IMR-90 (cell line): ENCODE measurements at regions of chr2 and their contacts with region 1.

Region 1: DNA sequence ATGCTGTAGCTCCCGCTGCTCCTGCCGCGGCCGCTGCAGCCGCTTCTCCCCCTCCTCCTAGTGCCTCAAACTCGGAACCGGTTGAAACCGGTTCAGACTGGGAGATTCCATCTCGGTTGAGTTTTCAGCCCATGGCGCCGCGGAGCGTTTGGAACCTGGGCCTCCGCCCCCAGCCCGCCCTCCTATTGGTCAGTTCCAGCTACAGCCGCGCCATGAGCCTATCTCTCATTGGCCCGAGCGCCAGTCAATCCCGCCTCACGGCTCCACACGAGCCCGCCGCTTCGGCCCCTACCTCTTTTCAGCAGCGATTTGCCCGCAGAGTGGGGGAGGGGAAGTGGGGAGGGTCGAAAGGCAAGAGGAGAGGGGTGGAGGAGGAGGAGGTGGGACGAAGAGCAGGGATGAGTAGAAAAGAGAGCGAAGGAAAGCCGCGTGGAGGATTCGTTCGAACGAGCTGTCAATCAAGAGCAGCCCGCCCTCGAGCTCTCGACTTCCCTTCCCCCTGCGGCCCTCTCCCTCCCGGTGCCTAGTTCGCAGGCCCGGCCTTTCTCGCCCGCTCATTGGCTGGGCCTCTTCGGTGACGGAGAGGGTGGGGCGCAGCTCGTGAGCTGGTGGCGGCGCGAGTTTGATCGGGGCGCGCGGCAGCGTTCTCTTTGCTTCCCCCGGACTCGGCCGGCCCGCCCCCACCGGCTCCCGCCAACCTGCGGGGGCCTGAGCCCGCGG is at the start of gene XPO1:
- DNase-seq: peak; percentile 99
- ATAC-seq: peak; percentile 88
- H3K4me3 ChIP-seq: peak within 1 kb of the TSS; percentile 83
- H3K27ac ChIP-seq: peak within 1 kb of the TSS; percentile 89
- H3K4me1 ChIP-seq: peaks cover 4% of the 10 kb centered on the region
- H3K27me3 ChIP-seq: no peaks in the 10 kb centered on the region
- CTCF ChIP-seq: no peak
- POLR2A ChIP-seq: peak; percentile 76
- RAD21 ChIP-seq: no peak
- total RNA-seq, gene XPO1: 104 and 192 TPM in 2 replicates

Region 2: DNA sequence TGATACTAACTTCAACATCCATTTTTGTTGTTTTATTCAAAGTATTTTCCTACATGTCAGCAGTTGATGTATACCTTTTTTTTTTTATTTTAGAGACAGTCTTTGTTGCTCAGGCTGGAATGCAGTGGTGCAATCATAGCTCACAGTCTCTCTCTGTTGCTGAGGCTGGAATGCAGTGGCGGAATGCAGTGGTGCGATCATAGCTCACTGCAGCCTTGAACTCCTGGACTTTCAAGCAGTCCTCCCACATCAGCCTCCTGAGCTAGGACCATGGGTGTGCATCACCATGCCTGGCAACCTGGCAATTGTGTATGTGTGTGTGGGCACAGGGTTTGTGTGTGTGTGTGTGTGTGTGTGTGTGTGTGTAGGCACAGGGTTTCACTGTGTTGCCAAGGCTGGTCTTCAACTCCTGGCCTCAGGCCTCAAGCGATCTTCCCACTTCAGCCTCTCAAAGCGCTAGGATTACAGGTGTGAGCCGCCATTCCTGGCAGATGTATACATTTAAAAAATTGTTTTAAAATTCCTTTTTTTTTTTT is 447.9 kb before region 1 on chr2:
- CTCF ChIA-PET with region 1: no interaction called
- POLR2A ChIA-PET with region 1: no interaction called
- dilution Hi-C with region 1: no loop called
- in situ Hi-C with region 1: no loop called
- intact Hi-C with region 1: no loop called
- DNase-seq: peak; percentile 35
- ATAC-seq: peak; percentile 76
- H3K4me3 ChIP-seq: no peak overlapping the region
- H3K27ac ChIP-seq: no peak overlapping the region
- H3K4me1 ChIP-seq: no peaks in the 10 kb centered on the region
- H3K27me3 ChIP-seq: no peaks in the 10 kb centered on the region
- CTCF ChIP-seq: no peak
- POLR2A ChIP-seq: no peak
- RAD21 ChIP-seq: no peak

Region 3: GRCh38 chr2:61470965-61471904 is 67.1 kb before region 1 on chr2 and contains the start of gene USP34:
- CTCF ChIA-PET with region 1: no interaction called
- POLR2A ChIA-PET with region 1: interaction called, 3 read pairs
- dilution Hi-C with region 1: no loop called
- in situ Hi-C with region 1: no loop called
- intact Hi-C with region 1: loop called (anchors 1 kb)
- DNase-seq: peak; percentile 95
- ATAC-seq: peak; percentile 90
- H3K4me3 ChIP-seq: peak within 1 kb of the TSS; percentile 95
- H3K27ac ChIP-seq: peak within 1 kb of the TSS; percentile 98
- H3K4me1 ChIP-seq: no peaks in the 10 kb centered on the region
- H3K27me3 ChIP-seq: no peaks in the 10 kb centered on the region
- CTCF ChIP-seq: no peak
- POLR2A ChIP-seq: peak; percentile 97
- RAD21 ChIP-seq: no peak; the same call in 1 of the 2 replicates
- total RNA-seq, gene USP34: 128 and 139 TPM in 2 replicates

Region 4: GRCh38 chr2:61520261-61520660 is 18.1 kb before region 1 on chr2:
- CTCF ChIA-PET with region 1: interaction called, 4 read pairs
- POLR2A ChIA-PET with region 1: interaction called, 11 read pairs
- dilution Hi-C with region 1: no loop called
- in situ Hi-C with region 1: no loop called
- intact Hi-C with region 1: no loop called
- DNase-seq: no peak
- ATAC-seq: no peak
- H3K4me3 ChIP-seq: no peak overlapping the region
- H3K27ac ChIP-seq: peak overlapping the region; percentile 70; the same call in 1 of the 2 replicates
- H3K4me1 ChIP-seq: no peaks in the 10 kb centered on the region
- H3K27me3 ChIP-seq: no peaks in the 10 kb centered on the region
- CTCF ChIP-seq: no peak
- POLR2A ChIP-seq: no peak
- RAD21 ChIP-seq: no peak

Region 5: DNA sequence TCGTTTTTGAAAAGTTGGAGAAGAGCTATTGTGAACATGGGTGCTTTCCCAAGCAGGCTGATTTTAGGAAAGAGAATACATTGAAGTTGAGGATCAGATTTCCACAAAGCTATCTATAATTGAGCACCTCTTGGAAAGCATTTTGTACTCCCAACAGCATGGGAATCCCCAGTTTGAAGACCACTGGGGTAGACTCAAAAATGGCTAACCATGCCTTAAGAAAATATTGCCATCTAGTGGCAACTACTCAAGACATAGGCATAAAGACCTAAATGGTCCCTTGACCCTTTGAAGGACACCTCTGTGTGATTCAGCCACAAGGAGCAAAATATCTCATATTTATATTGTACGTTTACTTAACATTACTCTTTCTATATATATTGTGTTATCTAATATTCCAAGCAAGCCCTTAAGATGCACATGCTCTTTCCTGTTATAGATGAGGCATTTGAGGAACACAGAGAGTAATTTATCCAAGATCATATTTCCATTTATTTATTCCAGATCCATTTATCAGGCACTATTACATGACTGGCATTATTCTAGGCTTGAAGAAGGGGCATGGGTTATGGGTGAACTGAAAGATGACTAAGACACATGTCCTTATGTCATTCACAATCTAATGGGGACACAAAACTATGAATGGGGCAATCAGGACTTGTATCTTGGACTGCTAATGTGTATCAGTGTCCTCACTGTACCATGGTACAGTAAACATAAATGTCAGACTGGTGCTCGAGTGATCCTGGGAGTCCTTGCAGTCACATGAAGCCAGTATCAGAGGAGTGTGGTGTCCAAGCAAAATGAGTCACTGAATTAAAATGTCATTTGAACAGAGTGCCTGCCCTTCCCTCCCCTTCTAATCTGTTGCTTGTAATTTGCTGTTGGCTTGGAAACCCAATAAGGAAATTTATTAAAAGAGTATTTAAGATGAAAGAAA is 120.8 kb after region 1 on chr2:
- CTCF ChIA-PET with region 1: no interaction called
- POLR2A ChIA-PET with region 1: no interaction called
- dilution Hi-C with region 1: no loop called
- in situ Hi-C with region 1: no loop called
- intact Hi-C with region 1: loop called (anchors 5 kb)
- DNase-seq: peak; percentile 61
- ATAC-seq: peak; percentile 85
- H3K4me3 ChIP-seq: no peak overlapping the region
- H3K27ac ChIP-seq: no peak overlapping the region
- H3K4me1 ChIP-seq: peaks cover 5% of the 10 kb centered on the region; the same call in 1 of the 2 replicates
- H3K27me3 ChIP-seq: no peaks in the 10 kb centered on the region
- CTCF ChIP-seq: peak; percentile 60
- POLR2A ChIP-seq: no peak
- RAD21 ChIP-seq: peak; percentile 72

Region 6: DNA sequence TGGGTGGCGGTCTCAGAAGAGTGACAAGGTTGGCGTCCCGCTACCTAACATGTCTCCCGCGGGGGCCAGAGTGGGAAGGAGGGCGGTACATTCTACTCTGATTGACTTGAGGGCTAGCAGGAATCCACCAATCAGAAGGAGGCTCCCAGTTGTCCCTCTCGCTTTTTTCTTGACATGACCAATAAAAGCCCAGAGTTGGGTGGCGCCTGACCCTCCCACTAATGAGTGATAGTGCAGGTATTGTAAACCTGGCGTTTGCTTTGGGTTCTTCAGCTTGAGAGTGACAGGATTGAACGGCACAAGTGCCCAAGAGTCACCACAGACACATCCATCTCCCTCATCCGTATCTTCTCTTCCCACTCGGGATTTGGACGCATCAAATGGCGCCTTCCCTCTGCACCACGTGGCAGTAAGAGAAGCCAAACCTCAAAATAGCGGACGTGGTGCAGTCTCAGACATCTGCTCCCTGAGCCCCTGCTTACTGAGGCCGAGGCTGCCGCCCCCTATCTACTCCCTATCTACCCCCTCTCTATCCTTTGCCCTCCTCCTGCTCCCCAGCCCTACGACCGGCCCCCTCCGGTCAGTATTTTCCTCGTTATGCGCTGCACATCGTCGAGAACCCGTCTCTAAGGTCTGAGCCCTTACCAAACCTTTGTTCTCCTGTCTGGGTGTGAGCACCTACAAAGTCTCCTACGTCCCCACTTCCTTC is 316.3 kb after region 1 on chr2:
- CTCF ChIA-PET with region 1: no interaction called
- POLR2A ChIA-PET with region 1: no interaction called
- dilution Hi-C with region 1: no loop called
- in situ Hi-C with region 1: no loop called
- intact Hi-C with region 1: loop called (anchors 2 kb)
- DNase-seq: peak; percentile 97
- ATAC-seq: peak; percentile 89
- H3K4me3 ChIP-seq: peak overlapping the region; percentile 93
- H3K27ac ChIP-seq: peak overlapping the region; percentile 8
- H3K4me1 ChIP-seq: no peaks in the 10 kb centered on the region
- H3K27me3 ChIP-seq: no peaks in the 10 kb centered on the region
- CTCF ChIP-seq: no peak
- POLR2A ChIP-seq: no peak
- RAD21 ChIP-seq: no peak